Motor neuron (in vitro differentiated cells): ENCODE measurements at regions of chr11 and their contacts with region 1.

Region 1: GRCh38 chr11:72722050-72722748 is 30.0 kb downstream of the ARAP1 start:
- ATAC-seq: peak; percentile 85 to 96 (median 91)
- H3K4me3 ChIP-seq: peak overlapping the region in 4 of 5 donors; percentile 6 to 37 (median 21)
- H3K27ac ChIP-seq: peak overlapping the region; percentile 61 to 78
- H3K4me1 ChIP-seq: peaks cover 30 to 49% of the 10 kb centered on the region in 2 donors

Region 2: DNA sequence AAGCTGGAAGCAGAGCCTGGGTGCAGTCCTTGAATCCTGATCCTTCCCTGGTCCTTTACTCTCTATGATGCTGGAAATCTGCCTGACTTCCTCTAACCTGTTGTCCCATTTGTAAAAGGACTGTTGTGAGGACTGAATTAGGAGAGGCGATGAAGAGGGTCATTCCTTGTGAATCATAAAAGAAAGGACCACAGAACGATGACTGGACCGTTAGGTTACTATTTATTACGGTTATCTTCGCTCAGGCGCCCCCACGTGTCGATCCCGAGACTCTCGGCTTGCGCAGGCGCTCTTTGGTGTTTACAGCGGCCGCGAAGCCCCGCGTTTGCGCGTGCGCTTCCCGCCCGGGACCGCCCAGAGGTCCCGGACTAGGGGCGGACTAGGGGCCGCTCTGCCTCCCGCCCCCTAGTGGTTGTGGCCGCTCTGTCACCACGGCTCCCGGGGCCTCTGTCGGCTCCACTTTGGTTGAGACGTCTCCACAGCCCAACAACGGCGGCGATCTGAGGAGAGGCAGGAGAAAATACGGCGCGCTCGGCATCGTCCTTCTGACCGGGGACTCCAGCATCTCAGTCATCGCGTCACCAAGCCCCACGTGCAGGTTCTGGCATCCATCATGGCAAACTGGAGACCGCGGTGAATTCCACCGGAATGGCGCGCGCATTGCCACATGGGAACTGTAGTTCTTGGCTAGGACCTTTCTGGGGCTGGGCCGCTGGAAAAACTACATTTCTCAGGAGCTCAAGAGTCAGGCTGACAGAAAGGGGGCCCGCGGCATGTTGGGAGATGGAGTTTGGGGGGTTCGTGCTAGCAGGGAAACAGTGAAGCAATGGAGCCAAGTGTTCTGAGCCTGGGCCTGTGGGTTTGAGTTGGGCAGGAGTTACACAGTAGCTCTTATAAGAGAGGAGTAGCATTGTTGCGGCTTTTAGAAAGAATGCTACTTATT is 71.5 kb after region 1 on chr11 and contains the start of gene STARD10:
- in situ Hi-C with region 1: loop called in 1 of 9 experiments (anchors 10 kb)
- ATAC-seq: peak; percentile 92 to 96 (median 93)
- H3K4me3 ChIP-seq: peak within 1 kb of the TSS; percentile 58 to 82 (median 71)
- H3K27ac ChIP-seq: peak within 1 kb of the TSS; percentile 95 to 97
- H3K4me1 ChIP-seq: peaks cover 17% of the 10 kb centered on the region in 2 donors
- total RNA-seq, gene STARD10: 7.8 to 26.9 (median 15.7) TPM

Region 3: GRCh38 chr11:73177778-73178577 is 455.8 kb after region 1 on chr11:
- in situ Hi-C with region 1: loop called in 1 of 9 experiments (anchors 25 kb)
- ATAC-seq: peak; percentile 84 to 98 (median 88)
- H3K4me3 ChIP-seq: no peak overlapping the region
- H3K27ac ChIP-seq: no peak overlapping the region
- H3K4me1 ChIP-seq: peaks cover 9 to 11% of the 10 kb centered on the region in 2 donors